CD4-positive, alpha-beta T cell (primary cell): ENCODE measurements at regions of chr1 and their contacts with region 1.

Region 1: DNA sequence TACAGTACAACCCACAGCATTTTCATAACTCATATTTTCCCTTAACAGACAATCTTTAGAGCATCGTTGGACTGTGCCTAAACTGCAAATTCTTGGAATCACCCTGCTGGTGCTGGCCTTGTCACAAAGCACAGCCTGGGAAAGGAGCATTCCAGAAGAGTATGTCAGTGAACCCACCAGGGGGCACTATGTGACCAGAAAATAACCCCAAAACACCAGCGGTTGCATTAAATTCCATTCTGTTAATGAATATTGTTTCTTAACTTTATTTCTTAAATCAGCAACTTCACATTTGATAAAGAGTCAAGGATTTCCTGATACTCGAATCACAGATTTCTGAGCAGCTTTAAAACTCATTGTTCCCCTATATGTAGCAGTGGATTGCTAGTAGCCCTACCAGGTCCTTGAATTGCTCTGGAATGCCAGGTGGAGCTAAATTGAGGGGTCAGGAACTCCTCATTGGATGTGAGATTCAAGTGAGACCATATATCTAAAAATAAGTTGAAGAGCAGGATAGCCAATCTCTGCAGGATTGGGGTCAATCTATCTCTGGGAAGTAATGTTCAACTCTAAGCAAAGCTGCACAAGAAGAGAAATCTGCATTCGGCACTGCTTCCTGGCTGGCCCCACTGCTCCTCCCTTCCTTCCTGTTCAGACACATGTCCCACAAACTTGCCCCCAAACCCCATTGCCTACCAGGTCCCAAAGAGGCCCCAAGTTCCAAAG is 12.7 kb upstream of the RAB4A start:
- DNase-seq: peak; percentile 45 to 84 (median 58)
- ATAC-seq: no peak
- H3K4me3 ChIP-seq: no peak overlapping the region
- H3K4me3 Mint-ChIP-seq: peak overlapping the region; percentile 39
- H3K27ac ChIP-seq: no peak overlapping the region
- H3K27ac Mint-ChIP-seq: peak overlapping the region; percentile 54
- H3K4me1 ChIP-seq: peaks cover 32% of the 10 kb centered on the region
- H3K4me1 Mint-ChIP-seq: peaks cover 36% of the 10 kb centered on the region
- H3K27me3 ChIP-seq: no peaks in the 10 kb centered on the region
- H3K27me3 Mint-ChIP-seq: no peaks in the 10 kb centered on the region
- CTCF ChIP-seq: peak; percentile 97

Region 2: DNA sequence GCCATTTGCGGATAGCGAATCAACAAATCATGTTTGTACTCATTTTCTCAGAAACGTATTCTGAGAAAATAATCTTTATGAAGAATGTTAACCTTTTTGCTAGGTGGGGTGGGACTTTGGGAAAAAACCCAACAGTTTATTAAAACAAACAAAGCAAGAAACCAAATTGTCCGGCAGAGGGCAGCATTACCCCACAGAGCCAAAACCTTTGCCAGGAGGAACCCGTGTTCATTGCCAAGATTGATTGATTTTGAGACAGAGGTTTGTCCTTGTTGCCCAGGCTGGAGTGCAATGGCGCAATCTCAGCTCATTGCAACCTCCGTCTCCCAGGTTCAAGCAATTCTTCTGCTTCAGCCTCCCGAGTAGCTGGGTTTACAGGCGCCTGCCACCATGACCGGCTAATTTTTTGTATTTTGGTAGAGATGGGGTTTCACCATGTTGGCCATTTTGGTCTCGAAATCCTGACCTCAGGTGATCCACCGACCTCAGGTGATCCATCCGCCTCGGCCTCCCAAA is 593.7 kb before region 1 on chr1:
- CTCF ChIA-PET with region 1: interaction called, 22 read pairs
- POLR2A ChIA-PET with region 1: interaction called, 11 read pairs
- intact Hi-C with region 1: loop called (anchors 1 kb)
- DNase-seq: peak; percentile 65 to 87 (median 77)
- ATAC-seq: no peak
- H3K4me3 ChIP-seq: no peak overlapping the region
- H3K4me3 Mint-ChIP-seq: no peak overlapping the region
- H3K27ac ChIP-seq: no peak overlapping the region
- H3K27ac Mint-ChIP-seq: no peak overlapping the region
- H3K4me1 ChIP-seq: peaks cover 5% of the 10 kb centered on the region
- H3K4me1 Mint-ChIP-seq: no peaks in the 10 kb centered on the region
- H3K27me3 ChIP-seq: no peaks in the 10 kb centered on the region
- H3K27me3 Mint-ChIP-seq: peaks cover 3% of the 10 kb centered on the region
- CTCF ChIP-seq: peak; percentile 91

Region 3: GRCh38 chr1:228734881-228735801 is 523.1 kb before region 1 on chr1 and contains the start of gene RHOU:
- CTCF ChIA-PET with region 1: interaction called, 11 read pairs
- POLR2A ChIA-PET with region 1: interaction called, 34 read pairs
- intact Hi-C with region 1: loop called (anchors 1 to 2 kb)
- DNase-seq: peak; percentile 35 to 86 (median 60)
- ATAC-seq: peak; percentile 85
- H3K4me3 ChIP-seq: peak within 1 kb of the TSS; percentile 74
- H3K4me3 Mint-ChIP-seq: peak within 1 kb of the TSS; percentile 92
- H3K27ac ChIP-seq: no peak within 1 kb of the TSS
- H3K27ac Mint-ChIP-seq: peak within 1 kb of the TSS; percentile 81
- H3K4me1 ChIP-seq: peaks cover 28% of the 10 kb centered on the region
- H3K4me1 Mint-ChIP-seq: peaks cover 28% of the 10 kb centered on the region
- H3K27me3 ChIP-seq: no peaks in the 10 kb centered on the region
- H3K27me3 Mint-ChIP-seq: peaks cover 2% of the 10 kb centered on the region
- CTCF ChIP-seq: peak; percentile 36
- total RNA-seq, gene RHOU: 1.2 TPM

Region 4: DNA sequence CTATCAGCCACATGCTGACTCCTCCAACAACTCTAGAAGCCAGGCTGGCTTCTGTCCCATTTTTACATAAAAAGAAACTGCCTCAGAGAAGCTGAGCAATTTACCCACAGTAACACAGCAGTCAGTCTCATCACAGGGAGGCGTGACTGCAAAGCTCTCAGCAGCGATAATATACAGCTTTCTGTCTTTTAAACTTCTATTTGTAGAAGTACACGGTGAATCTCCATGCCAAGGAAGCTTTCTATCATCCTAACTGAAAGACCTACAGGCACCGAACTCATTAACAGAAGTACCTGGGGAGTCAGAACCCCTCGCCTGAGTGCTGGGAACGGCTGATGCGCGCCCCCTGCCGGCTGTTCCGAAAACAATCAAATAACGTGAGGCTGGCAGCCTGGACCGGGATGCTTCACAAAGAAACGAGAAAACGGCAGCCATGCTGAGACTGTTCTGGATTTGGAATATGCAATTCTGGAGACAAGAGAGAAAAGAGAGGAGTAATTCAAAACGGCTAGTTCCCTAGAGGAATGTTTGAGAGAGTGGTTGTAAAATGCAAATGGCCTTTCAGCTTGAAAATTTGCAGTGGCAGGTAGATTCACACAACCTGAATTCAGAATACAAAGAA is 30.8 kb before region 1 on chr1:
- CTCF ChIA-PET with region 1: interaction called, 18 read pairs
- POLR2A ChIA-PET with region 1: interaction called, 17 read pairs
- intact Hi-C with region 1: loop called (anchors 2 kb)
- DNase-seq: peak; percentile 69 to 90 (median 81)
- ATAC-seq: peak; percentile 84
- H3K4me3 ChIP-seq: no peak overlapping the region
- H3K4me3 Mint-ChIP-seq: no peak overlapping the region
- H3K27ac ChIP-seq: no peak overlapping the region
- H3K27ac Mint-ChIP-seq: no peak overlapping the region
- H3K4me1 ChIP-seq: peaks cover 13% of the 10 kb centered on the region
- H3K4me1 Mint-ChIP-seq: peaks cover 17% of the 10 kb centered on the region
- H3K27me3 ChIP-seq: no peaks in the 10 kb centered on the region
- H3K27me3 Mint-ChIP-seq: no peaks in the 10 kb centered on the region
- CTCF ChIP-seq: peak; percentile 96

Region 5: DNA sequence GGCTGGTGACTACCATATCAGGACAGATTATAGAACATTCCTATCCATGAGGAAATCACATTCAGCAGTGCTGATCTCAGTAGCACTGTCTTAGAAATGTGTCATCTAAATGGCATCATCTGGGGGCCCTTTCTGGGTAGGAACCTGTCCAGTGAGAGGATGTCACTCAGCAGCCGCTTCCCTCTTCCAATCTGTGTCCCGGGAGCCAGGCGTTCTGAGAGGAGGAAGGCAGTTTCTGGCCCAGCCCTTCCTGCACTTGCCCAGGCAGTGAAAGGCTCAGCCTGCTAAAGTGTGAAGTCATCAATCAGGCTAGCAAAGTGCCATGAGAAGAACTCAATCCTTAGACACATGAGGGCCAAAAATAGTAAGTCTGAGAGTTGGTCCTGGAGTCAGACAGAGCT is 38.3 kb after region 1 on chr1:
- CTCF ChIA-PET with region 1: no interaction called
- POLR2A ChIA-PET with region 1: no interaction called
- intact Hi-C with region 1: no loop called
- DNase-seq: no peak
- ATAC-seq: no peak
- H3K4me3 ChIP-seq: no peak overlapping the region
- H3K4me3 Mint-ChIP-seq: no peak overlapping the region
- H3K27ac ChIP-seq: no peak overlapping the region
- H3K27ac Mint-ChIP-seq: no peak overlapping the region
- H3K4me1 ChIP-seq: peaks cover 2% of the 10 kb centered on the region
- H3K4me1 Mint-ChIP-seq: no peaks in the 10 kb centered on the region
- H3K27me3 ChIP-seq: no peaks in the 10 kb centered on the region
- H3K27me3 Mint-ChIP-seq: no peaks in the 10 kb centered on the region
- CTCF ChIP-seq: no peak

Region 6: DNA sequence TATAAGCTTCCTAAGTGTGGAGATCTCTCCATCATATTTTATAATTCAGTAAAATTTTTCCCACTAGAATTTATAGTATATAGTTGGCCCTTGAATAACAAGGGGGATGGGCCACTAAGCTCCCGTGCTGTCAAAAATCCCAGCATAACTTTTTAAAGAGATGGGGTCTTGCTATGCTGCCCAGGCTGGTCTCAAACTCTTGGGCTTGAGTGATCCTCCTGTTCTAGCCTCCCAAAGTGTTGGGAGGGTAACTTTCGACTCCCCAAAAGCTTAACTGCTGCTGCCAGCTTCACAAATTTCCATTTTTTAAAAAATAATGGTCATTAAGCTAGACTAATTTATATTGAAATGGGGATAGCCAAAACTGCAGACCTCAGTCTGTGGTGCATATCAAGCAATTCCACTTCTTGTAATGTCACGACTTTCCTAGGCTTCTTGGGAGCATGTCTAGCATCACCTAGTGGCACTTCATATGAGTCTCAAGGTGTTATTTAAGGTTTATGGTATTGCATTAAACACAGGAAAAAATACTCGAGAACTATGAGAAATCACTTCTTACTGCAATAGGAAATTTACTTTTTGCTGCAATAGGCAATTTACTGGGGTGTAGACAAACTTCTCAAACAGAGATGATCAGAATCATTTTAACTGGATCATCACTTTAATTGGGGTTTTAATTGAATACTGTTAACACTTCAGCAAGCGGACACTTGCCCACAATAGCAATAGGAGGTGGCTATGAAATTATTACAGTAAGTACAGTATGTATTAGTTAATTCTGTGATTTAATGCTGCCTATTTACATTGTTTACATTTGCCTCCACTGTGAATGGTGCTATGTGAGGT is 195.0 kb after region 1 on chr1:
- CTCF ChIA-PET with region 1: no interaction called
- POLR2A ChIA-PET with region 1: no interaction called
- intact Hi-C with region 1: loop called (anchors 5 to 10 kb)
- DNase-seq: no peak
- ATAC-seq: no peak
- H3K4me3 ChIP-seq: no peak overlapping the region
- H3K4me3 Mint-ChIP-seq: no peak overlapping the region
- H3K27ac ChIP-seq: no peak overlapping the region
- H3K27ac Mint-ChIP-seq: no peak overlapping the region
- H3K4me1 ChIP-seq: no peaks in the 10 kb centered on the region
- H3K4me1 Mint-ChIP-seq: no peaks in the 10 kb centered on the region
- H3K27me3 ChIP-seq: no peaks in the 10 kb centered on the region
- H3K27me3 Mint-ChIP-seq: no peaks in the 10 kb centered on the region
- CTCF ChIP-seq: peak; percentile 30

Region 7: GRCh38 chr1:229507951-229508822 is 250.0 kb after region 1 on chr1 and contains the start of gene NUP133:
- CTCF ChIA-PET with region 1: interaction called, 4 read pairs
- POLR2A ChIA-PET with region 1: interaction called, 10 read pairs
- intact Hi-C with region 1: no loop called
- DNase-seq: peak; percentile 96 to 100 (median 98)
- ATAC-seq: peak; percentile 97
- H3K4me3 ChIP-seq: peak within 1 kb of the TSS; percentile 98
- H3K4me3 Mint-ChIP-seq: peak within 1 kb of the TSS; percentile 97
- H3K27ac ChIP-seq: peak within 1 kb of the TSS; percentile 90 to 93
- H3K27ac Mint-ChIP-seq: peak within 1 kb of the TSS; percentile 97
- H3K4me1 ChIP-seq: peaks cover 19% of the 10 kb centered on the region
- H3K4me1 Mint-ChIP-seq: peaks cover 33% of the 10 kb centered on the region
- H3K27me3 ChIP-seq: no peaks in the 10 kb centered on the region
- H3K27me3 Mint-ChIP-seq: no peaks in the 10 kb centered on the region
- CTCF ChIP-seq: no peak
- total RNA-seq, gene NUP133: 42.0 to 45.3 TPM

Region 8: DNA sequence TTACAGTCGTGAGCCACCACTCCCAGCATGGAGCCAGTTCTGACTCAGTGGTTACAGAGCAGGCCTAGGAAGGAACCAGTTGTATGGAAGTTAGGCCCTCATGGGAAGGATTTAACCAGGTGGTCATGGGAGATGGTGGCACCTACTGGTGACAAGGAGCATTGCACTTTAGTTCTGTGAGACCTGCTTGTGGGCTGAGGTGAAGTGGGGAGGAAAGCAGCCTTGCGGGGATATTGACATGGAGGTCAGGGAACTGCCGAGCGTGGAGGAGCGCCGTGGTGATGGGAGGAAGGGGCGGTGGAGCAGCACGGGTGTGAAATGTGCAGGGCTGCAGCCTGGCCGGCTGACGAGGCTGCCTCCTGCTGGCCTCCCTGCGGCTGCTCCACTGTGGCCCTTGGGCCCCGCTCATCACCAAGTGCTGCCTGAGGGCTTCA is 909.2 kb after region 1 on chr1:
- CTCF ChIA-PET with region 1: no interaction called
- POLR2A ChIA-PET with region 1: no interaction called
- intact Hi-C with region 1: loop called in 1 of 2 experiments (anchors 5 kb)
- DNase-seq: peak in 11 of 14 experiments; percentile 9 to 75 (median 14)
- ATAC-seq: peak; percentile 60
- H3K4me3 ChIP-seq: no peak overlapping the region
- H3K4me3 Mint-ChIP-seq: no peak overlapping the region
- H3K27ac ChIP-seq: no peak overlapping the region
- H3K27ac Mint-ChIP-seq: no peak overlapping the region
- H3K4me1 ChIP-seq: peaks cover 9% of the 10 kb centered on the region
- H3K4me1 Mint-ChIP-seq: peaks cover 30% of the 10 kb centered on the region
- H3K27me3 ChIP-seq: no peaks in the 10 kb centered on the region
- H3K27me3 Mint-ChIP-seq: no peaks in the 10 kb centered on the region
- CTCF ChIP-seq: peak; percentile 77